ENCODE measurements at regions of chr4 and their contacts with region 1.

Region 1: DNA sequence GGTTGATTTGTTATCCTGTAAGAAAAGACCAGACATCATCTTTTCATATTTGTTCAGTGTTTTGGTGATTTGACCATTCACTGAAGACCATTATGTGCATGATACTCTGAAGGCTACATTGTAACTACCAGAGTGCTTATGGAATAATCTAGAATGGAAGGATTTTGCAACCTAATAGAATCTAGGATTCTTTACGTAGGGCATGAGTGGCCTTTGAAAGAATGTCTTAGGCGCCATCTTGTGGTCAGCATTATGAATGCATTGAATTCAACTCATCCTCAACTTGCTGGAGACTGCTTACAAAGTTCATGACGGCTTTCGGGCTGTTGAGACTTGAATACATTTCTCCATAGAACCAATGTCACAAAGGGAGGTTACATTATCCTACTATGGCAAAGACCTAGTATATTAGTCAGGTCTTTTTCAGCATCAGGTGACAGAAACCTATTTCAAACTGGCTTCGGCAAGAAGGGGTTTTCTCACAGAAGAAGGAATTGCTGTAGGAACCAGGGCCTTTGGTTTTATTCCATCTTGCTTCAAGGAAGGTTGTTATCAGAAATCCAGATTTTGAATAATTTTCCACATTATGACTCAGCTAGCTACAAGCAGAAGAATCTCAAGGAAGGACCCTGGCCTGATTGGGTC is 104.1 kb downstream of the GPAT3 start:
- DNase-seq: peak; percentile 78
- H3K4me3 ChIP-seq: no peak overlapping the region
- H3K27ac ChIP-seq: no peak overlapping the region
- H3K4me1 ChIP-seq: no peaks in the 10 kb centered on the region
- H3K27me3 ChIP-seq: peaks cover 13 to 22% of the 10 kb centered on the region in 2 experiments
- CTCF ChIP-seq: peak; percentile 59 to 66
- POLR2A ChIP-seq: no peak

Region 2: GRCh38 chr4:83054928-83055327 is 585.0 kb before region 1 on chr4:
- CTCF ChIA-PET with region 1: no interaction called
- POLR2A ChIA-PET with region 1: no interaction called
- dilution Hi-C with region 1: no loop called
- intact Hi-C with region 1: loop called (anchors 10 kb)
- DNase-seq: peak; percentile 40
- H3K4me3 ChIP-seq: no peak overlapping the region
- H3K27ac ChIP-seq: no peak overlapping the region
- H3K4me1 ChIP-seq: no peaks in the 10 kb centered on the region
- H3K27me3 ChIP-seq: no peaks in the 10 kb centered on the region
- CTCF ChIP-seq: peak; percentile 11 to 17
- POLR2A ChIP-seq: no peak

Region 3: DNA sequence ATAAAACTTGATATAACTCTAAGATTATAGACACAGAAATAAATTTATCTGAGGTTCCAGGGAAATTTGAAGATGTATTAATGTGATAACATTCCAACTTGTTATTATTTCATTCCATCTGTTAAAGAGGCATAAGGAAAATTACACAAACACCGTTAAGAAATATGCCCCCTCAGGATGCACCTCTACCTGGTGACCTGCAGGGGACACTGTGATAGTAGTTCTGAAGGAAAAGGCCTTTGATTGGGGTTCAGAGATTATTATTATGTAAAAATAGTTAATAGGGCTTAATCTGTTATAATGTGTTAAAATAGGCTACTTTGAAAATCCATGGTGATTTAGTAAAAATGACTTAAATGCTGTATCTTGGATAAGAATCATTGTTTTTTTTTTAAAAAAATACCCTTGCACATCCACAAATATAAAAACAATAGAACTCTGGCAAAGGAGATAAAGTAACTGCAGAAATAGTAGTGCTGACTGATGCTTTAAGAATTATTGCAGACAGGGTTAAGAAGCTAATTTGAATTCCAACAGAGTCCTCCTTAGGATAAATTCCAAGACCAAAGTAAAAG is 149.0 kb before region 1 on chr4:
- CTCF ChIA-PET with region 1: interaction called, 6 read pairs
- POLR2A ChIA-PET with region 1: no interaction called
- dilution Hi-C with region 1: no loop called
- intact Hi-C with region 1: loop called (anchors 1 kb)
- DNase-seq: peak; percentile 33
- H3K4me3 ChIP-seq: no peak overlapping the region
- H3K27ac ChIP-seq: no peak overlapping the region
- H3K4me1 ChIP-seq: no peaks in the 10 kb centered on the region
- H3K27me3 ChIP-seq: peaks cover 0 to 1% of the 10 kb centered on the region in 2 experiments
- CTCF ChIP-seq: peak; percentile 65 to 67
- POLR2A ChIP-seq: no peak

Region 4: GRCh38 chr4:83510442-83510841 is 129.5 kb before region 1 on chr4:
- CTCF ChIA-PET with region 1: interaction called, 81 read pairs
- POLR2A ChIA-PET with region 1: no interaction called
- dilution Hi-C with region 1: no loop called
- intact Hi-C with region 1: loop called (anchors 1 kb)
- DNase-seq: no peak
- H3K4me3 ChIP-seq: no peak overlapping the region
- H3K27ac ChIP-seq: no peak overlapping the region
- H3K4me1 ChIP-seq: no peaks in the 10 kb centered on the region
- H3K27me3 ChIP-seq: no peaks in the 10 kb centered on the region
- CTCF ChIP-seq: no peak
- POLR2A ChIP-seq: no peak

Region 5: GRCh38 chr4:84258905-84259830 is 619.2 kb after region 1 on chr4:
- CTCF ChIA-PET with region 1: interaction called, 33 read pairs
- POLR2A ChIA-PET with region 1: no interaction called
- dilution Hi-C with region 1: no loop called
- intact Hi-C with region 1: loop called (anchors 1 kb)
- DNase-seq: peak; percentile 7
- H3K4me3 ChIP-seq: no peak overlapping the region
- H3K27ac ChIP-seq: no peak overlapping the region
- H3K4me1 ChIP-seq: no peaks in the 10 kb centered on the region
- H3K27me3 ChIP-seq: no peaks in the 10 kb centered on the region
- CTCF ChIP-seq: peak; percentile 46 to 59
- POLR2A ChIP-seq: no peak

Region 6: DNA sequence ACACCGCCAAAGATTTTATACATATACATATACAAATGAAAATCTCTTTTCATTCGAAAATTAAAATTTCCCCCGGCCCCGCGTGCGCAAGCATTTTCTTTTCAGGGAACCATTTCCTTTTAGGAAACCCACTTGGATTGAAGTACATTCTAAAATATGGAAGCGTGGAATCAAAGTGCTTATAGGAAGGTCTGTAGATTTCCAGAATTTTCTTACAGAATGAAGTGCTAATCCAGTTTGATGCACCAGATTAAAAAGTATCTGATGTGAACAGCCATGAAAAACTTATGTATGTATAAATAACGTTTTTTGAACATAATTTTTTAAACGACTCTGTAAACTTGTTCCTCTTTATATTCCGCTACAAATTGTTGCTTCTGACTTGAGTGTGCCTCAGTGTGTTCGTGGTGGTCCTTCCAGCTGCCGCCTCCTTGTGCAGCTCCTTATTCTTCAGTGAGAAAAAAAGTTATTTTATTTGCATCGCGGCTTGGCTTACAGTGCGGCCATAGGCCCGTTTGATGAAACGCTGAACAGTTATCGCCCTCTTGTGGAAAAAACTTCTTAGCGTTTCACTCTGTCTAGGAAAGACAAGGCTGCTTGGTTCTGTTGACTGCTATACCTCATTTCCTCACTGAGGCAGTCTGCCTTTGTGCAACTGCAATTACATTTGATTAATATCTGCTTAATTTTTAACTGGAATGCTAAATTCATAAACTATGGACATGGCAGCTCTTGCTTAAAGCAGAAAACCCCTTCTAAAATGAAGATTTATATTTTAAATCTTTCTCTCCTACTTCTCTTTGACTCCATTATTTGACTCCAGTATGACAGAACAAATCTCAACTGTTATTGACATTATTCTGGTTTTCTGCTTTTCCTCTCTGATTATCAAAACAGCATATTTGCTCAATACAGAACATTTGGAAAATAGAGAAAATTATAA is 863.8 kb after region 1 on chr4:
- CTCF ChIA-PET with region 1: interaction called, 50 read pairs
- POLR2A ChIA-PET with region 1: no interaction called
- dilution Hi-C with region 1: no loop called
- intact Hi-C with region 1: loop called (anchors 1 kb)
- DNase-seq: peak; percentile 67
- H3K4me3 ChIP-seq: no peak overlapping the region
- H3K27ac ChIP-seq: no peak overlapping the region
- H3K4me1 ChIP-seq: peaks cover 3% of the 10 kb centered on the region
- H3K27me3 ChIP-seq: peaks cover 48 to 77% of the 10 kb centered on the region in 2 experiments
- CTCF ChIP-seq: peak; percentile 61 to 76
- POLR2A ChIP-seq: no peak

Measured in endothelial cell of umbilical vein (primary cell).